ENCODE measurements at regions of chr16 and their contacts with region 1.

Region 1: GRCh38 chr16:24139282-24139681 is 116.9 kb upstream of the CACNG3 start:
- DNase-seq: no peak
- H3K4me3 ChIP-seq: no peak overlapping the region
- H3K27ac ChIP-seq: no peak overlapping the region
- H3K4me1 ChIP-seq: peaks cover 18% of the 10 kb centered on the region
- H3K27me3 ChIP-seq: no peaks in the 10 kb centered on the region
- CTCF ChIP-seq: no peak

Region 2: GRCh38 chr16:23826528-23827045 is 312.7 kb before region 1 on chr16:
- CTCF ChIA-PET with region 1: no interaction called
- POLR2A ChIA-PET with region 1: no interaction called
- intact Hi-C with region 1: no loop called
- DNase-seq: no peak
- H3K4me3 ChIP-seq: no peak overlapping the region
- H3K27ac ChIP-seq: no peak overlapping the region
- H3K4me1 ChIP-seq: peaks cover 5% of the 10 kb centered on the region
- H3K27me3 ChIP-seq: no peaks in the 10 kb centered on the region
- CTCF ChIP-seq: no peak

Region 3: GRCh38 chr16:24015923-24016322 is 123.4 kb before region 1 on chr16:
- CTCF ChIA-PET with region 1: no interaction called
- POLR2A ChIA-PET with region 1: interaction called, 25 read pairs
- intact Hi-C with region 1: no loop called
- DNase-seq: peak; percentile 32
- H3K4me3 ChIP-seq: no peak overlapping the region
- H3K27ac ChIP-seq: peak overlapping the region; percentile 1
- H3K4me1 ChIP-seq: peaks cover 71% of the 10 kb centered on the region
- H3K27me3 ChIP-seq: no peaks in the 10 kb centered on the region
- CTCF ChIP-seq: peak; percentile 33; the same call in 1 of the 2 replicates

Region 4: DNA sequence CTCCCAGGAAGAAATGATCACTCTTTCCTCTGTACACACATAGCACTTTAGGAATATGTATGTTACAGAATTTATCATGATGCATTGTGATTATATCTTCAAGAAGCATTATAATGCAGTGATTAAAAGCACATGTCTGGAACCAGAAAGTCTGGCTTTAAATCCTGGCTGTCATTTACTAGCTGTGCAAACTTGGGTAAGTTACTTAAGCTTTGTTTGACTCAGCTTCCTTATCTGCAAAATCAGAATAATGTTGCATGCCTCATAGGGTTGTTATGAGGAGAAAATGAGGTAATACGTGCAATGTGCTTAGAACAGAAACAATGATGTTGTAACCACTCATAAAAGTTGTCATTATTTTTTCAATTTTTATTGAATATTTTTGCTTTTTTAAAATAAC is 1274.7 kb after region 1 on chr16:
- CTCF ChIA-PET with region 1: no interaction called
- POLR2A ChIA-PET with region 1: no interaction called
- intact Hi-C with region 1: no loop called
- DNase-seq: peak; percentile 60
- H3K4me3 ChIP-seq: no peak overlapping the region
- H3K27ac ChIP-seq: no peak overlapping the region
- H3K4me1 ChIP-seq: no peaks in the 10 kb centered on the region
- H3K27me3 ChIP-seq: no peaks in the 10 kb centered on the region
- CTCF ChIP-seq: no peak

Measured in A673 (cell line).